ENCODE measurements at regions of chr18 and their contacts with region 1.

Region 1: GRCh38 chr18:79246348-79247108 is 149.2 kb upstream of the NFATC1 start:
- DNase-seq: peak; percentile 23 to 51 (median 47)
- H3K4me3 ChIP-seq: no peak overlapping the region
- H3K4me3 Mint-ChIP-seq: no peak overlapping the region
- H3K27ac ChIP-seq: no peak overlapping the region
- H3K27ac Mint-ChIP-seq: peak overlapping the region in 4 of 7 donors; percentile 8 to 60 (median 44)
- H3K4me1 ChIP-seq: no peaks in the 10 kb centered on the region
- H3K4me1 Mint-ChIP-seq: peaks cover 6% of the 10 kb centered on the region
- H3K27me3 ChIP-seq: no peaks in the 10 kb centered on the region
- H3K27me3 Mint-ChIP-seq: no peaks in the 10 kb centered on the region
- CTCF ChIP-seq: peak; percentile 92

Region 2: DNA sequence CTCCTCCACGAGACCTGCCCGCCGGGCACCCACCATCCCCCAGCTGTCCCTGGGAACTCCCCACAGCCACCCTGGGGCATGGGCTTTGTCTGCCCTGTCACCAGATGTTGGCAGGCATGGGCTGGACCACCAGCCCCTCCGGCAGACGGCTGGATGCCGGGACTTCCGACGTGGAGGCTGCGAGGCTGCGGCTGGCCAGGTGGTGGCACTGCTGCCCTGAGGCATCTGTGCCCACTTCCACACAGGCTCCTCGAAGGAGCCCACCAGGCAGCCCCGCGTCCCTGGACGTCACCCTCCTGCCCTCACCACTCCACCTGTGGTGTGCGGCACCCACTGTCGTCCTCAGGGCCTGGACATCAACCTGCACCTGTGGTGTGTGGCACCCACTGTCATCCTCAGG is 586.8 kb before region 1 on chr18:
- intact Hi-C with region 1: loop called in 1 of 2 experiments (anchors 10 kb)
- DNase-seq: no peak
- H3K4me3 ChIP-seq: no peak overlapping the region
- H3K4me3 Mint-ChIP-seq: no peak overlapping the region
- H3K27ac ChIP-seq: no peak overlapping the region
- H3K27ac Mint-ChIP-seq: no peak overlapping the region
- H3K4me1 ChIP-seq: no peaks in the 10 kb centered on the region
- H3K4me1 Mint-ChIP-seq: no peaks in the 10 kb centered on the region
- H3K27me3 ChIP-seq: no peaks in the 10 kb centered on the region
- H3K27me3 Mint-ChIP-seq: peaks cover 5% of the 10 kb centered on the region in 3 donors
- CTCF ChIP-seq: peak; percentile 46

Region 3: DNA sequence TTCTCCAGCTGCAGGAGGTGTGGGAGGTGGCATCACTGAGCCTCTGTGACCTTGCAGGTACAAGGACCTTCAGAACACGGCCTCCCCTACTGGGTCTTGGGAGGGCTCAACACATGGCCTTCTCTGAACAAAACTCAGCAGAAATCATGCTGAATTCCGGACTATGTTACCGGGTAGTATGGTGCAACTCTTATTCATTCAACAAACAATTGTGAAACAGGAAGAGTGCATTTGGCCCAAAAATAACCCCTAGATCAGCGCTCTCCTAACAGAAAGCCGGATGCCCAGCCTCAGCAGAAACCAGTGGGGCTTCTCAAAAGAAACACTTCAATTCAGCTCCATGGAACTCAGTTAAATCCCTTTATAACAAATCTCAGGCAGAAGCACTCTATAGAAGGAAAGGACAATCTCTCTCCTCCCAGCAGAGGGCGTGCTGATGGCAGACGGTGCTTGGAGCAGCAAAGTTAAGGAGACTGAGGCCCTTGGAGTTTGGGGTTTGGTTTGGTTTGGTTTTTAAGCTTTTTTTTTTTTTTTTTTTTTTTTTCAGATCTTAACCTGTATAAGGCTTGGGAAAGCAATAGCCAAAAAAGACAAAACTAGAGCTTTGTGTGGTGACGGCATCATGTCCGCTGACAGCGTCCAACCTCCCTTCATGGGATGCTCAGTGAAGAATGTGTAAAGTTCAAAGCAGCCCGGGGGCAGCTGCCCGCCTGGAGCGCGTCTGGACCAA is 371.1 kb before region 1 on chr18:
- intact Hi-C with region 1: loop called in 1 of 2 experiments (anchors 2 kb)
- DNase-seq: peak; percentile 3 to 19 (median 4)
- H3K4me3 ChIP-seq: peak overlapping the region in 1 of 3 experiments; percentile 23
- H3K4me3 Mint-ChIP-seq: peak overlapping the region; percentile 17 to 73
- H3K27ac ChIP-seq: peak overlapping the region; percentile 7 to 15
- H3K27ac Mint-ChIP-seq: peak overlapping the region in 3 of 7 donors; percentile 32 to 54 (median 44)
- H3K4me1 ChIP-seq: peaks cover 35 to 36% of the 10 kb centered on the region in 2 donors
- H3K4me1 Mint-ChIP-seq: peaks cover 42% of the 10 kb centered on the region
- H3K27me3 ChIP-seq: peaks cover 0 to 4% of the 10 kb centered on the region in 2 donors
- H3K27me3 Mint-ChIP-seq: peaks cover 5 to 10% (median 8%) of the 10 kb centered on the region in 3 donors
- CTCF ChIP-seq: peak; percentile 57

Measured in CD14-positive monocyte (primary cell).